ENCODE measurements at regions of chr5 and their contacts with region 1.

Region 1: DNA sequence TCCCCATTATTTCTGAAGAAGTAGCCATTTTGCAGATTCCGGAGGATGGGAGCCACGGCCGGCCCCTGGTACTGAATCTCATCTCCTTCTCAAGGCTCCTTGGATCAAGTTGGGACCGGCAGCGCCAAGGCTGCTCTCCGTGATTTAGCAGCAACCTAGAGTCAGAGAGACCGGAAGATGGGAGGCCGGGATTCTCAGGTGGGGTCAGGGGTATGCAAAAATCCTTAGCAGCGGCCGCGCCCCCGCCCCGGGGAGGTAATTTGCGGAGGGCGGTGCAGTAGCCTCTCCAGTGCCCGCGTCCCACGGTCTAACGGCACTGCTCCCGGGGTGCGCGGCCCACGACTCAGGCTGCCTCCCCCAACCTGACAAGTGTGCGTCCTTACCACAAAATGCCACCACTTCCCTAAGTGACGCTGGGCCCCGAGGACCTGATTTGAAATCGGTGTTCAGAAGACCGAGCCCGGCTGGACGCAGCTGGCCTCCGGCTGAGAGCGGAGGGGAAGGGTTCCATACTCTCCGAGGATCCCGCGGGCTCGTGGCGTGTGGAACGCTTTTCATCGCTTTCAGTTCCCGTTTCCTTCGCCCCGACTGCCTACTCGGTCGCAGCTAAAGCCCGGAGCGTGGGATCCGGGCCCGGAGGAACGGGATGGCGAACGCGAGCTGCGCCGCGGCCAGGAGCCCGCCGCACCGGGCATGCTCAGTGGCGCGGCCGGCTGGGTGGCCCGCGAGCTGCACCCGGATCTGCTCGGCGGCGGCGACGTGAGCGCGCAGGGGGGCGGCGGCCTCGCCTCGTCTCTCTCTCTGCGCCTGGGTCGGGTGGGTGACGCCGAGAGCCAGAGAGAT is at the start of gene SCAMP1:
- DNase-seq: peak; percentile 90
- ATAC-seq: peak; percentile 85
- H3K4me3 ChIP-seq: peak within 1 kb of the TSS; percentile 97
- H3K27ac ChIP-seq: peak within 1 kb of the TSS; percentile 93
- H3K4me1 ChIP-seq: peaks cover 14% of the 10 kb centered on the region
- H3K27me3 ChIP-seq: no peaks in the 10 kb centered on the region
- CTCF ChIP-seq: no peak
- total RNA-seq, gene SCAMP1: 25.5 and 26.4 TPM in 2 replicates

Region 2: DNA sequence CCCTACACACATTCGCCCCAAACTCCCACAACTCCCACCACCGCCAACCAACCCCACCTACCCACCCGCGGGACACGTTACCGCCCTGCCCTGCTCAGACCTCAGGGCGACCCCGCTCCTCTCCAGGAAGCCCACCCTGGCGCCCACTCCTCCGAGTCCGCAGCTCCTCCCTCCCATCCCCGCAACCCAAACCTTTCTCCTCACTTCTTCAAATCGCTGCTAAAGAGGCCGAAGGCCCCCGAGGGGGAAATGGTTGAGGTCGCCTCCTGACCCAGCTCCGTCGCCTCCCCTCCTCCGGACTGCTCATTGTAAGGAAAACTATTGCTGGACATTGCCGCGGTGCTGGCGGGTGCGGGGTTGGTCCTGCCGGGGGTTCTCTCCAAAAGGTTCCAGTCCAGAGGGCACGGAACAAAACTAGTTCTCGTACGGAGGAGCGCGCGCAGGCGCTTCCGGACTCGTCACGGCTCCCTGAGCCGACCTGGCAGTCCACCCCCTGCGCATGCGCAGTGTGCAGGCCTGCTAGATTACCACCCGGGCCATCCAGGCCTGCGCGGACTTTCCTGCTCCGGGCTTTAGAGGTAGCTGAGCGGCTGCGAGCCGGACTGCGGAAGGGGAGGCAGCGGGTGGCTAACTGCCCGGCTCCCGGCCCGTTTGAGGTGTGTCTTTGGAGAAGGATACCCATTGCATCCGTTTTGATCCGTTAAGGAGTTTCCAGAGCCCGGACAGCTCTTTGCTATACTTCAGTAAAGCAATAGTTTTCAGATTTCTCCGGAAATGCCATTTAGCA is 65.6 kb before region 1 on chr5 and contains the start of gene AP3B1:
- CTCF ChIA-PET with region 1: no interaction called
- POLR2A ChIA-PET with region 1: no interaction called
- intact Hi-C with region 1: loop called (anchors 1 kb)
- DNase-seq: peak; percentile 98
- ATAC-seq: peak; percentile 90
- H3K4me3 ChIP-seq: peak within 1 kb of the TSS; percentile 98
- H3K27ac ChIP-seq: no peak within 1 kb of the TSS
- H3K4me1 ChIP-seq: peaks cover 5% of the 10 kb centered on the region; the same call in 1 of the 2 replicates
- H3K27me3 ChIP-seq: no peaks in the 10 kb centered on the region
- CTCF ChIP-seq: no peak
- total RNA-seq, gene AP3B1: 25.7 and 26.3 TPM in 2 replicates

Region 3: GRCh38 chr5:78405829-78406750 is 46.0 kb after region 1 on chr5:
- CTCF ChIA-PET with region 1: no interaction called
- POLR2A ChIA-PET with region 1: no interaction called
- intact Hi-C with region 1: loop called (anchors 5 kb)
- DNase-seq: peak; percentile 66
- ATAC-seq: peak; percentile 97
- H3K4me3 ChIP-seq: peak overlapping the region; percentile 29; the same call in 1 of the 2 replicates
- H3K27ac ChIP-seq: peak overlapping the region; percentile 78
- H3K4me1 ChIP-seq: peaks cover 28% of the 10 kb centered on the region
- H3K27me3 ChIP-seq: no peaks in the 10 kb centered on the region
- CTCF ChIP-seq: no peak

Region 4: DNA sequence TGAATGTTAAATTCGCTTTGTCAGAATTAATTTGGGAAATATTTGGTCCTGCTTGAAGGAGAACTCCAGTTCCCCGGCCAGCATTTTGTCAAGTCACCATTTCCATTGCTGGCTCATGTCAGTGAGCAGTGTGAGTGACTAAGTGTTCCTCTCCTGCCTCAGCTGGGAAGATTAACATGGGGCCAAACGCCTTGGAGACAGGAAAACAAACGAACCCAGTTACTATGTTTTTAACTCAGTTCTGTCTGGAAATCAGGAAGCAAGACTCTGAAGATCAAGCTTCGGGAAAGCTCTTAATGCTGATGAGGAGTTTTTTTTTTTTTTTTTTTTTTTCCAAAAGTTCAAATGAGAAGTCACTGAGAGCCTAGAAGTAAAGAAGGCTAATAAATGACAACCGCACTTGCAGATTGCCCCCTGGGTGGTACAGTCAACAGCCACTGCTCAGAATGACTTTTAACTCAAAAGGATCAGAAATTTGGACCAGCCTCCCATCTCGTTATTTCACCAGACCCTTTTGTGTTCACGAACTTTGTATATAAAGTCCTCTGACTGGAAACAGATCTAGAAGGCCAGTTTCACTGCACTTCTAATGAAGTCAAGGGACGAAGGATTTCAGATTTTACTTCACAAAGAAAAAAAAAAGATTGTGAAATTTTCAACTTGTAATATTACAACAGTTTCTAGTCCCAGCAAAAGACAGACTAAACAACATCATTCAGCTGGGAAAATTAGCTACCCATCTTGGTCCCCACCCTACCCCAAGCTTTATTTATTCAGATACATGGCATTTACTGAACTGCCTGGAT is 167.2 kb after region 1 on chr5:
- CTCF ChIA-PET with region 1: no interaction called
- POLR2A ChIA-PET with region 1: no interaction called
- intact Hi-C with region 1: loop called (anchors 2 kb)
- DNase-seq: peak; percentile 52
- ATAC-seq: no peak
- H3K4me3 ChIP-seq: no peak overlapping the region
- H3K27ac ChIP-seq: peak overlapping the region; percentile 93
- H3K4me1 ChIP-seq: peaks cover 40% of the 10 kb centered on the region
- H3K27me3 ChIP-seq: no peaks in the 10 kb centered on the region
- CTCF ChIP-seq: no peak